CD4-positive, alpha-beta memory T cell (primary cell): ENCODE measurements at regions of chr4 and their contacts with region 1.

Region 1: DNA sequence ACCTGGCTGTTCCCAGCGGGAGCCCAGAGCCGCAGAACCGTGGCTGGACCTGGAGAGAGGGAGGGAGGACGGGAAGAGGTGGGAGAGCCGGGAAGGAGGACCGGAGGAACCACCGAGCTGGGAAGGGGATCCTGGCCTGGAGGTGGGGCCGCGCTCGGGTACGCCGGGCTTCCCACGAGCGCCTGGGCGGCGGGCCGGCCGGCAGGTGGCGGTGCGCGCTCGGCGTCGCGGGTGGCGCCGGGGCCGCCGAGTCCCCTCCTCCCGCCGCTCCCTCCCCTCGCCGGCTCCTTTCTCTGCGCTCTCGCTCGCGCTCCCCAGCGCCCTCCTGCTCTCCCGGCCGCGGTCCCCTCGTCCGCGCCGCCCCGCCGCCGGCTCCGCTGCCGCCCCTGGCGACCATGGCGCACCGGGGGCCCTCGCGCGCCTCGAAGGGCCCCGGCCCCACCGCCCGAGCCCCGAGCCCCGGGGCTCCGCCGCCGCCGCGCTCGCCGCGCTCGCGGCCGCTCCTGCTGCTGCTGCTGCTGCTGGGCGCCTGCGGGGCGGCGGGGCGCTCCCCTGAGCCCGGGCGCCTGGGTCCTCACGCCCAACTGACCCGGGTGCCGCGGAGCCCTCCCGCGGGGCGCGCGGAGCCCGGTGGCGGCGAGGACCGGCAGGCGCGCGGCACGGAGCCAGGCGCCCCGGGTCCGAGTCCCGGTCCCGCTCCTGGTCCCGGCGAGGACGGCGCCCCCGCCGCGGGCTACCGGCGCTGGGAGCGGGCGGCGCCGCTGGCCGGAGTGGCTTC is at the start of gene SORCS2:
- DNase-seq: peak in 4 of 5 donors; percentile 30 to 49 (median 35)
- H3K4me3 ChIP-seq: no peak within 1 kb of the TSS
- H3K4me3 Mint-ChIP-seq: peak within 1 kb of the TSS in 5 of 8 donors; percentile 20 to 77 (median 51)
- H3K27ac ChIP-seq: no peak within 1 kb of the TSS
- H3K27ac Mint-ChIP-seq: no peak within 1 kb of the TSS
- H3K4me1 ChIP-seq: peaks cover 4% of the 10 kb centered on the region
- H3K4me1 Mint-ChIP-seq: peaks cover 0 to 5% (median under 1%) of the 10 kb centered on the region in 4 donors
- H3K27me3 ChIP-seq: peaks cover 4% of the 10 kb centered on the region
- H3K27me3 Mint-ChIP-seq: peaks cover 33 to 35% of the 10 kb centered on the region in 2 donors
- total RNA-seq, gene SORCS2: not detected

Region 2: GRCh38 chr4:6905516-6906445 is 286.7 kb before region 1 on chr4:
- CTCF ChIA-PET with region 1: no interaction called
- POLR2A ChIA-PET with region 1: no interaction called
- intact Hi-C with region 1: no loop called
- DNase-seq: no peak
- H3K4me3 ChIP-seq: no peak overlapping the region
- H3K4me3 Mint-ChIP-seq: peak overlapping the region in 1 of 8 donors; percentile 20
- H3K27ac ChIP-seq: no peak overlapping the region
- H3K27ac Mint-ChIP-seq: peak overlapping the region in 3 of 7 donors; percentile 41 to 74 (median 70)
- H3K4me1 ChIP-seq: peaks cover 42% of the 10 kb centered on the region
- H3K4me1 Mint-ChIP-seq: peaks cover 18 to 43% (median 30%) of the 10 kb centered on the region in 4 donors
- H3K27me3 ChIP-seq: no peaks in the 10 kb centered on the region
- H3K27me3 Mint-ChIP-seq: no peaks in the 10 kb centered on the region

Region 3: GRCh38 chr4:7124689-7125442 is 67.6 kb before region 1 on chr4:
- CTCF ChIA-PET with region 1: no interaction called
- POLR2A ChIA-PET with region 1: no interaction called
- intact Hi-C with region 1: no loop called
- DNase-seq: no peak
- H3K4me3 ChIP-seq: no peak overlapping the region
- H3K4me3 Mint-ChIP-seq: no peak overlapping the region
- H3K27ac ChIP-seq: no peak overlapping the region
- H3K27ac Mint-ChIP-seq: no peak overlapping the region
- H3K4me1 ChIP-seq: no peaks in the 10 kb centered on the region
- H3K4me1 Mint-ChIP-seq: no peaks in the 10 kb centered on the region
- H3K27me3 ChIP-seq: no peaks in the 10 kb centered on the region
- H3K27me3 Mint-ChIP-seq: peaks cover 9 to 13% of the 10 kb centered on the region in 2 donors

Region 4: DNA sequence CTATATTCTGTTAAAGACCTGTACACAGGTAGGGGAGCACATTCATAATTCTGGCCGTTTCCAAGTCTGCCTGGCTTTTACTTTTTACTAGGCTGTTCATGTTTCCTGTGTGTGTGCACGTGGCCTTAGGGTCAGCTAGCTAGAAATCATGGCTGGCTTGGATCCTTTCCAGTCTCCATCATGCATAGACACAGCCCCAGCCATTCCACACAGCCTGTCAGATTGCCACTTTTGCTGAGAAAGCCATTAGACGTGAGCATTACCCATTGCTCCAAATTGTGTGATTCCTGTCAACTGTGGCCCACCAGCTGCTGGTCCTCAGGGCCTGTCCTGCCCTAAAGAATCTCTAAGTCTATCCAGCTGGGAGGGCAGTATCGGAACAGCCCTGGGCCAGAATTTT is 11.5 kb before region 1 on chr4:
- CTCF ChIA-PET with region 1: no interaction called
- POLR2A ChIA-PET with region 1: no interaction called
- intact Hi-C with region 1: no loop called
- DNase-seq: no peak
- H3K4me3 ChIP-seq: no peak overlapping the region
- H3K4me3 Mint-ChIP-seq: no peak overlapping the region
- H3K27ac ChIP-seq: no peak overlapping the region
- H3K27ac Mint-ChIP-seq: no peak overlapping the region
- H3K4me1 ChIP-seq: no peaks in the 10 kb centered on the region
- H3K4me1 Mint-ChIP-seq: peaks cover 0 to 6% (median 2%) of the 10 kb centered on the region in 4 donors
- H3K27me3 ChIP-seq: no peaks in the 10 kb centered on the region
- H3K27me3 Mint-ChIP-seq: peaks cover 3 to 5% of the 10 kb centered on the region in 2 donors

Region 5: GRCh38 chr4:7719354-7720174 is 527.1 kb after region 1 on chr4:
- CTCF ChIA-PET with region 1: no interaction called
- POLR2A ChIA-PET with region 1: no interaction called
- intact Hi-C with region 1: loop called (anchors 2 kb)
- DNase-seq: peak in 4 of 5 donors; percentile 33 to 46 (median 37)
- H3K4me3 ChIP-seq: no peak overlapping the region
- H3K4me3 Mint-ChIP-seq: no peak overlapping the region
- H3K27ac ChIP-seq: no peak overlapping the region
- H3K27ac Mint-ChIP-seq: peak overlapping the region in 1 of 7 donors; percentile 38
- H3K4me1 ChIP-seq: no peaks in the 10 kb centered on the region
- H3K4me1 Mint-ChIP-seq: peaks cover 0 to 7% (median 4%) of the 10 kb centered on the region in 4 donors
- H3K27me3 ChIP-seq: no peaks in the 10 kb centered on the region
- H3K27me3 Mint-ChIP-seq: peaks cover 1 to 9% of the 10 kb centered on the region in 2 donors

Region 6: GRCh38 chr4:7987148-7987989 is 794.9 kb after region 1 on chr4:
- CTCF ChIA-PET with region 1: no interaction called
- POLR2A ChIA-PET with region 1: no interaction called
- intact Hi-C with region 1: loop called (anchors 5 kb)
- DNase-seq: peak; percentile 67 to 71 (median 69)
- H3K4me3 ChIP-seq: no peak overlapping the region
- H3K4me3 Mint-ChIP-seq: no peak overlapping the region
- H3K27ac ChIP-seq: no peak overlapping the region
- H3K27ac Mint-ChIP-seq: no peak overlapping the region
- H3K4me1 ChIP-seq: peaks cover 5% of the 10 kb centered on the region
- H3K4me1 Mint-ChIP-seq: peaks cover 2 to 4% (median 4%) of the 10 kb centered on the region in 4 donors
- H3K27me3 ChIP-seq: no peaks in the 10 kb centered on the region
- H3K27me3 Mint-ChIP-seq: no peaks in the 10 kb centered on the region